HCT116 (cell line): ENCODE measurements at regions of chr2 and their contacts with region 1.

Region 1: GRCh38 chr2:170409164-170409535 is 231.2 kb downstream of the MYO3B start:
- DNase-seq: peak; percentile 68
- ATAC-seq: peak; percentile 91
- H3K4me3 ChIP-seq: peak overlapping the region; percentile 27 to 44
- H3K27ac ChIP-seq: no peak overlapping the region
- H3K4me1 ChIP-seq: peaks cover 0 to 7% of the 10 kb centered on the region in 2 experiments; a peak in 1 of 4 replicates
- H3K27me3 ChIP-seq: no peaks in the 10 kb centered on the region
- CTCF ChIP-seq: peak; percentile 73 to 92 (median 79); a peak in 5 of 6 replicates
- POLR2A ChIP-seq: no peak
- RAD21 ChIP-seq: peak; percentile 79

Region 2: DNA sequence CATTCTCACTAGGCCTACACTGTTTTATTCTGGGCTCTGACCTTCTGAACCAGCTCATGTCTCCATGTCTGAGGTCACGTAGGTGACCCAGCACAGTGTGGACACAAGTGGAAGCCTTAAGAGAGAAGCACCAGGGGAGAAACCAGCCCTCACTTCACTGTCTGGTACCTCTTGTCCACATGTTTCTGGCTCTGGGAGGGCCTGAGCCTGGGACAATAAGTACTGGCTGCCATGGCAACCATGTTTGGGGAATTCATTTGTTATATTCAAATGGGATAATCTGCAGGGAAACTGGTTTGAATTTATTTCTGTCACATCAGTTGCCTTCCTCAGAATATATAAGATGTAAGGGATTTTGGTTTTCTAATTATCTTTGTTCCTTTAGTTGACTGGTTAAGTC is 207.9 kb before region 1 on chr2:
- CTCF ChIA-PET with region 1: no interaction called
- POLR2A ChIA-PET with region 1: no interaction called
- RAD21 ChIA-PET with region 1: no interaction called
- intact Hi-C with region 1: no loop called
- DNase-seq: no peak
- ATAC-seq: no peak
- H3K4me3 ChIP-seq: no peak overlapping the region
- H3K27ac ChIP-seq: no peak overlapping the region
- H3K4me1 ChIP-seq: no peaks in the 10 kb centered on the region
- H3K27me3 ChIP-seq: no peaks in the 10 kb centered on the region
- CTCF ChIP-seq: no peak
- POLR2A ChIP-seq: no peak
- RAD21 ChIP-seq: no peak

Region 3: DNA sequence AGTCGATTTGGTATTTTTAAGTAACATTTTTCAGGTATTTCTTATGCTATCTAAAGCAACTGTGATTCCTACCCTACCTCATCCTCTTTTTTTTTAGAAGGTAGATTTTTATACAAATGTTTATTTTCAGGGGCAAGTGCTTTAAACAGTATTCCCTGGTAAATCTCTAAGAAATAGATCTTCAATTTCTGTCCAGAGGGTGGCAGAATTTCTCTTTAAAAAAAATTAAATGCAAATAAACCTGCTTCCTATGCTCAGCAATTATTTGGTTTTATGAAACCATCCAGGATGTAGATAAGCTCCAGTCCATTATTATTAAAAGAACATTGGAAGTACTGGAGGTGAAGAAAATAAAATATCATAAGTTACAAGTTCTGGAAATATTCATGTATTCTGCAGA is 39.3 kb before region 1 on chr2:
- CTCF ChIA-PET with region 1: interaction called, 10 read pairs
- POLR2A ChIA-PET with region 1: no interaction called
- RAD21 ChIA-PET with region 1: interaction called in 1 of 2 experiments, 4 read pairs
- intact Hi-C with region 1: no loop called
- DNase-seq: peak; percentile 21
- ATAC-seq: peak; percentile 63
- H3K4me3 ChIP-seq: no peak overlapping the region
- H3K27ac ChIP-seq: no peak overlapping the region
- H3K4me1 ChIP-seq: no peaks in the 10 kb centered on the region
- H3K27me3 ChIP-seq: peaks cover 33% of the 10 kb centered on the region
- CTCF ChIP-seq: peak in 2 of 3 experiments; percentile 48 to 52; a peak in 3 of 6 replicates
- POLR2A ChIP-seq: no peak
- RAD21 ChIP-seq: peak; percentile 64

Region 4: DNA sequence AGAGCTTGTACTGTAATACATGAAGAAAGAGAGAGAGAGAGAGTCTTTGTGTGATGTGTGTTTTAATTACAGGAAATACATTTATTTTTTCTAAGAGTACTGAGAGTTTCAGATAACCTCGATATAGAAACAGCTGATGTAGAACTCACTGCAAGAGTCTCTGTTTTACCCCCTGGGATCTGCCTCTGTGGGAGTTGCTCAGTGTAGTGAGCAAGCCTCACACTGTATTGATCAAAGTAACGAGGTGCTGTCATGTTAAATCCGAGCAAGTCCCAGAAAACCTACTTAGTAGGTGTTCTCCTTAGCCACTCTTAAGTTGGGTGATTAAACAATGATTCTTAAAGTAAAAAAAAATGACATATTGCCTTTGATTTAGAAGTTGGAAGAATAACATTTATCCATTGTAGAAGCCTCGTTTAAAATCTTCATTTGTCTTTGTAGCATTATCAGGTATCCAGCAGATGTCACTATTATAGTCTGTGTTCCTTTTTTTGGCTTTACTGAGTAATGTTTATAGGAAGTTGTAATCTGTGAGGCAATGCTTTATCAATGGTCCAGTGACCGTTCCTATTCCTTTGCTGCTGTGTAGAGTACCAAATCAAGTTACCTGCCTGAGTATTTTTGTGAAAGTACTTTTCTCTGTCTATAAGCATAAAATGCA is 12.2 kb before region 1 on chr2:
- CTCF ChIA-PET with region 1: interaction called, 13 read pairs
- POLR2A ChIA-PET with region 1: no interaction called
- RAD21 ChIA-PET with region 1: interaction called in 1 of 2 experiments, 3 read pairs
- intact Hi-C with region 1: no loop called
- DNase-seq: no peak
- ATAC-seq: peak; percentile 60
- H3K4me3 ChIP-seq: no peak overlapping the region
- H3K27ac ChIP-seq: no peak overlapping the region
- H3K4me1 ChIP-seq: no peaks in the 10 kb centered on the region
- H3K27me3 ChIP-seq: no peaks in the 10 kb centered on the region
- CTCF ChIP-seq: peak; percentile 31 to 67 (median 62); a peak in 5 of 6 replicates
- POLR2A ChIP-seq: no peak
- RAD21 ChIP-seq: peak; percentile 65

Region 5: DNA sequence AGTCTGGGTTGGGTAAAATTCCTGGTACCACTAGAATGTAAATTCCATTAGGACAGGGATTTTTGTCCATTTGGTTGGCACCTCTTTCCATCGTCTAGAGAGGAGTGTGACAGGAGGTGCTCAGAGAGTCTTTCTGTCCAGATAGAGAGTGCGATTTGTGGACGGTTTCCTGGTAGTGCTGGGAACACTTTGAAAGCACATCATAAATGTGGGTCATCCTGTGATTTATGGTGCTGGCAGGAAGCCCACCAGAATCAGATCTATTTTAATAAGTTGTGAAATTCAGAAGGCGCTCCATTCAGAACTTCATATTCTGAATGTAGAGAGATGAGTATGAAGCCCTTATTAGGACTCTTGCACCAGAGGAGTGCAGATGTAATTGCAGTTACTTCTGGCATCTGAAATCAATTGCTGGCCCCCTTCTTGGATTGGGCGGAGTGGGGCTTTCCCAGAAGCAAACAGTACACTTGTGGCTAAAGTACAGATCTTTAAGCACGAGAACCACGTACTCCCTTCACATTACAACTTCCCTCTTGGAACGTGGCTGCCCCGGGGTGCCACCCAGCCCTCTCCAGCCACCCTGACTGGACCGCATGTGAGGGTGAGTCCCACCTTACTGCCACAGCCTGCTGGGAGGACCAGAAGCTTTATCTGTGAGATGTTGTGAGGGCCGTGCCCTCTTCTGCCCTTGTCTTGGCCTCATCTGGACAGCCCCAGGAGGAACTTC is 12.0 kb after region 1 on chr2:
- CTCF ChIA-PET with region 1: interaction called, 26 read pairs
- POLR2A ChIA-PET with region 1: no interaction called
- RAD21 ChIA-PET with region 1: no interaction called
- intact Hi-C with region 1: no loop called
- DNase-seq: no peak
- ATAC-seq: no peak
- H3K4me3 ChIP-seq: no peak overlapping the region
- H3K27ac ChIP-seq: no peak overlapping the region
- H3K4me1 ChIP-seq: no peaks in the 10 kb centered on the region
- H3K27me3 ChIP-seq: no peaks in the 10 kb centered on the region
- CTCF ChIP-seq: no peak
- POLR2A ChIP-seq: no peak
- RAD21 ChIP-seq: no peak

Region 6: DNA sequence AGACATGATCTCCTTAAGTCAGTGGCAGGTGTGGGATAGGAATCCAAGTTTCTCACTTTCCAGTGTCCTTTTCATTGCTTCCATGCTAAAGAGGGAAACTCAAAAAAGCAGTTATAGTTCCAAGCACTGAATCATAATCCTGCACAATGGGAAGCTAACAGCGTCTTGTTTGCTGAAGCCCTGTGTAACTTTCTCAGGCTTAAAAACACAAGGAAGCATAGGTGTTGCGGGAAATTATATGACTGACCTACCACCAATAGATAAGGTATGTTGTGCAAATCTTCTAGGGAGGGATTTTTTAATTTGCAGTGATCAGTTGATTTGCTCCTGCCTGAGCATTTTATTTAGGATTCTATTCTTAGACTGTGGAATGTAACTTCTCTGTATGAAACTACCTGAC is 19.7 kb after region 1 on chr2:
- CTCF ChIA-PET with region 1: interaction called, 13 read pairs
- POLR2A ChIA-PET with region 1: no interaction called
- RAD21 ChIA-PET with region 1: no interaction called
- intact Hi-C with region 1: no loop called
- DNase-seq: no peak
- ATAC-seq: no peak
- H3K4me3 ChIP-seq: no peak overlapping the region
- H3K27ac ChIP-seq: no peak overlapping the region
- H3K4me1 ChIP-seq: no peaks in the 10 kb centered on the region
- H3K27me3 ChIP-seq: no peaks in the 10 kb centered on the region
- CTCF ChIP-seq: no peak
- POLR2A ChIP-seq: no peak
- RAD21 ChIP-seq: no peak